ENCODE measurements at regions of chr3 and their contacts with region 1.

Region 1: GRCh38 chr3:192467230-192468140 is 259.9 kb downstream of the FGF12 start:
- DNase-seq: peak; percentile 79

Region 2: GRCh38 chr3:192382861-192383260 is 84.6 kb before region 1 on chr3:
- intact Hi-C with region 1: no loop called
- DNase-seq: no peak

Region 3: GRCh38 chr3:192566706-192567290 is 99.3 kb after region 1 on chr3:
- intact Hi-C with region 1: loop called (anchors 10 kb)
- DNase-seq: no peak

Region 4: GRCh38 chr3:192772240-192772894 is 304.9 kb after region 1 on chr3:
- intact Hi-C with region 1: loop called (anchors 10 kb)
- DNase-seq: no peak

Region 5: GRCh38 chr3:192802957-192803899 is 335.7 kb after region 1 on chr3:
- intact Hi-C with region 1: loop called (anchors 5 kb)
- DNase-seq: no peak